CD8-positive, alpha-beta memory T cell (primary cell): ENCODE measurements at regions of chr20 and their contacts with region 1.

Region 1: DNA sequence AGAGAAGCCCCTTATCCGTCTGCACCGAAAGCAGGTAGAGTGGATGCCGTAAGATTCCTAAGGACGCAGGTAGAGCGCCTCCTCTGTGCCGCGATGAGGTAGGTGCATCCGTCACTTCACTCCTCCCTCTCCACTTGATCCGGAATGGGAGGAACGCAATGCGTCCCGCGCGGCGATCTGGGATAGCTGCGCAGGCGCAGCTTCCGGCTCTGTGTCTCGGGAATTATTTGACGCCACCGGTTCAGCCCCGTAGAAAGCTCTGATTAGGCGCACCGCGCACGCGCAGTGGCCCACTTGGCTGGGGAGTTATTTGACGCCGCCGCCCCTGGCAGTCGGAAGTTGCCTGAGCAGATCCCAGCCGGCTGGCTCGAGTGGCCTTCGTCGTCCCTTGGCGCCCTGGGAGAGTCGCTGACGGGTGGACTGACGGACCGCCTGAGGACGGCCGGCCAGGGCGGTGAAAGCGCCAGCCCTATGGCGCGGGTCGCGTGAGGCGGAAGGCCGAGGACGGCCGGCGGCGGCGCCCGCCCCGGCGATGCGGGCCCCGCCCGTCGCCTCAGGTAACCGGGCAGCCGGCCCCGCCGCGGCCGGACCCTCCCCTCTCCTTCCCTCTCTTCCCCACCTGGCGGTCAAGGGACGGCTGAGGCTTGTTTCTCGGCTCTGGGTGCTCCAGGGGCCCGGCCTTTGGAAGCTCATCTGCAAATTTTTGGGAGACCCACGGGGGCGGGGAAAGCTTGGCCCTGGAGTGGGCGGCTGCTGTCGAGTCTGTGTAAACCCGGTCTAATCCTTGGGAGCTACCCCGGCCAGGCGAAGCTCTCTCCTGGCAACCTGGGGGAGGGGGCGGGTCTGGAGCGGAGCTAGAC is at the start of gene RALGAPB:
- DNase-seq: peak; percentile 98 to 99 (median 98)
- H3K4me3 ChIP-seq: peak within 1 kb of the TSS; percentile 75
- H3K4me3 Mint-ChIP-seq: peak within 1 kb of the TSS; percentile 89 to 95 (median 93)
- H3K27ac ChIP-seq: peak within 1 kb of the TSS; percentile 86
- H3K27ac Mint-ChIP-seq: peak within 1 kb of the TSS; percentile 87 to 96 (median 94)
- H3K4me1 ChIP-seq: peaks cover 29% of the 10 kb centered on the region
- H3K4me1 Mint-ChIP-seq: peaks cover 44 to 58% (median 57%) of the 10 kb centered on the region in 3 donors
- H3K27me3 ChIP-seq: no peaks in the 10 kb centered on the region
- H3K27me3 Mint-ChIP-seq: peaks cover 0 to 2% of the 10 kb centered on the region in 2 donors
- total RNA-seq, gene RALGAPB: 33.8 to 35.0 TPM

Region 2: DNA sequence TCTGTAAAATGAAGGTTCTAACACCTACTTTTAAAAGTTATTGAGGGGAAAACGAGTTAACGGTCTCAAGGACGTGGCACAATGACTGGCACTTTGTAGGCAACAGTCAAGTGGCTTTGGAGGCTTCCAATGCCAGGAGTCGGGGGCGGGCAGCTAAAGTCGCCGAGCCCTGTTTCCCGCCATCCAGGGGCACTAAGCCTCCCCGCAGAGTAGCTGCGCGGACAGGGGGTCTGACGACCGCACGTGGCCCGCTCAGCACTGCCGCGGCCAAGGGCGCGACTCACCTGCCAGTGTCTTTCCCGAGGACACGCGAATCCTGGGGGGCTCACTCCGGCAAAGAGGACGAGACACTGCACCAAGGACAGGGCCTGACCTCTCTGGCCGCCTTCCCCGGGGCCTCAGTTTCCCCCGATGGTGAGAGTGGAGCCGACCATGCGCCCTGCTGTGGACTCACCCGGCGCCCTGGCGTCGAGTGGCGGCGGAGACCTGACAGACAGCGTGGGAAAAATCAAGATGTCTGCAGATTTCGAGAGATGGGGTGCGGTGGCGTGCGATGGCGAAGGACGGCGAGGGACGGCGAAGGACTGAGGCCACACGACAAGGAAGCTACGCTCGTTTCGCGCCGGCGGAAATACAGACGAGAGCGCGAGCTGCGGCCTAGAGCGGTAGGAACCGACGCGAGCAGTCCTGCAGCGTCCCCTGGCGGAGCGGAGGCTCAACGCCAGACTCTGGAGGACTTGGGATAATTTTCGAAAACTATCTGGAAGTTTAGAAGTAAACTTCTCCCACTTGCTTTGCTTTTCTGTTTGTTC is 37.8 kb before region 1 on chr20 and contains the start of gene SNHG17:
- CTCF ChIA-PET with region 1: interaction called, 24 read pairs
- POLR2A ChIA-PET with region 1: interaction called, 31 read pairs
- DNase-seq: peak; percentile 83 to 92 (median 85)
- H3K4me3 ChIP-seq: peak within 1 kb of the TSS; percentile 93
- H3K4me3 Mint-ChIP-seq: peak within 1 kb of the TSS; percentile 96 to 99 (median 97)
- H3K27ac ChIP-seq: peak within 1 kb of the TSS; percentile 77
- H3K27ac Mint-ChIP-seq: peak within 1 kb of the TSS; percentile 95 to 99 (median 98)
- H3K4me1 ChIP-seq: peaks cover 26% of the 10 kb centered on the region
- H3K4me1 Mint-ChIP-seq: peaks cover 29 to 47% (median 41%) of the 10 kb centered on the region in 3 donors
- H3K27me3 ChIP-seq: no peaks in the 10 kb centered on the region
- H3K27me3 Mint-ChIP-seq: peaks cover 6 to 12% of the 10 kb centered on the region in 2 donors
- total RNA-seq, gene SNHG17: 211 to 216 TPM

Region 3: GRCh38 chr20:38446441-38447209 is 26.1 kb before region 1 on chr20:
- CTCF ChIA-PET with region 1: interaction called, 26 read pairs
- POLR2A ChIA-PET with region 1: interaction called, 17 read pairs
- DNase-seq: peak; percentile 89 to 94 (median 90)
- H3K4me3 ChIP-seq: peak overlapping the region; percentile 93
- H3K4me3 Mint-ChIP-seq: peak overlapping the region; percentile 80 to 92 (median 85)
- H3K27ac ChIP-seq: peak overlapping the region; percentile 78
- H3K27ac Mint-ChIP-seq: peak overlapping the region; percentile 77 to 91 (median 86)
- H3K4me1 ChIP-seq: peaks cover 15% of the 10 kb centered on the region
- H3K4me1 Mint-ChIP-seq: peaks cover 20 to 28% (median 25%) of the 10 kb centered on the region in 3 donors
- H3K27me3 ChIP-seq: no peaks in the 10 kb centered on the region
- H3K27me3 Mint-ChIP-seq: peaks cover 6 to 9% of the 10 kb centered on the region in 2 donors

Region 4: GRCh38 chr20:38601216-38602184 is 128.8 kb after region 1 on chr20 and contains the start of gene ARHGAP40:
- CTCF ChIA-PET with region 1: no interaction called
- POLR2A ChIA-PET with region 1: no interaction called
- DNase-seq: no peak
- H3K4me3 ChIP-seq: no peak within 1 kb of the TSS
- H3K4me3 Mint-ChIP-seq: peak within 1 kb of the TSS in 2 of 7 donors; percentile 14 to 77
- H3K27ac ChIP-seq: no peak within 1 kb of the TSS
- H3K27ac Mint-ChIP-seq: peak within 1 kb of the TSS in 1 of 8 donors; percentile 34
- H3K4me1 ChIP-seq: no peaks in the 10 kb centered on the region
- H3K4me1 Mint-ChIP-seq: peaks cover 6 to 13% (median 7%) of the 10 kb centered on the region in 3 donors
- H3K27me3 ChIP-seq: peaks cover 23% of the 10 kb centered on the region
- H3K27me3 Mint-ChIP-seq: peaks cover 57 to 73% of the 10 kb centered on the region in 2 donors
- total RNA-seq, gene ARHGAP40: not detected